A673 (cell line): ENCODE measurements at regions of chr17 and their contacts with region 1.

Region 1: DNA sequence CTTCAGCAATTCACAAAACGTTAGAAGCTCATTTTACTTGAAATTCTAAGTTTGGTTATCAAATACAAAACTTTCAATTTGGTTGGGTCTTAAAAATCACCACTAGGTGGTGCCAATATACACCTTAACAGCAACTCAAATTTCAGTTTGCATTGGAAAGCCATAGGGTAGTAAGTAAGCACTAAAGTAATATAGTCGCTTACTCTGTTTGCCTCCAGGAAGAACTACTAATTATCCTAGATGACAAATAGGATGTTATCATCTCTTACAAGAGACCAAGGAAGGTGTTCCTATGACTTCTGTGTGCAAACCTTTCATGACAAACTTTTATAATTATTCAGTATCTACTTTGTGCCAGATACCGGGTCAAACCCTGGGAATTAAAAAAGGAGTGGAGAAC is 93.3 kb downstream of the MYO1D start:
- DNase-seq: peak; percentile 60
- H3K4me3 ChIP-seq: no peak overlapping the region
- H3K27ac ChIP-seq: no peak overlapping the region
- H3K4me1 ChIP-seq: no peaks in the 10 kb centered on the region
- H3K27me3 ChIP-seq: no peaks in the 10 kb centered on the region
- CTCF ChIP-seq: peak; percentile 58

Region 2: GRCh38 chr17:32648450-32648849 is 135.2 kb before region 1 on chr17:
- CTCF ChIA-PET with region 1: no interaction called
- POLR2A ChIA-PET with region 1: no interaction called
- intact Hi-C with region 1: no loop called
- DNase-seq: no peak
- H3K4me3 ChIP-seq: no peak overlapping the region
- H3K27ac ChIP-seq: no peak overlapping the region
- H3K4me1 ChIP-seq: no peaks in the 10 kb centered on the region
- H3K27me3 ChIP-seq: no peaks in the 10 kb centered on the region
- CTCF ChIP-seq: no peak

Region 3: DNA sequence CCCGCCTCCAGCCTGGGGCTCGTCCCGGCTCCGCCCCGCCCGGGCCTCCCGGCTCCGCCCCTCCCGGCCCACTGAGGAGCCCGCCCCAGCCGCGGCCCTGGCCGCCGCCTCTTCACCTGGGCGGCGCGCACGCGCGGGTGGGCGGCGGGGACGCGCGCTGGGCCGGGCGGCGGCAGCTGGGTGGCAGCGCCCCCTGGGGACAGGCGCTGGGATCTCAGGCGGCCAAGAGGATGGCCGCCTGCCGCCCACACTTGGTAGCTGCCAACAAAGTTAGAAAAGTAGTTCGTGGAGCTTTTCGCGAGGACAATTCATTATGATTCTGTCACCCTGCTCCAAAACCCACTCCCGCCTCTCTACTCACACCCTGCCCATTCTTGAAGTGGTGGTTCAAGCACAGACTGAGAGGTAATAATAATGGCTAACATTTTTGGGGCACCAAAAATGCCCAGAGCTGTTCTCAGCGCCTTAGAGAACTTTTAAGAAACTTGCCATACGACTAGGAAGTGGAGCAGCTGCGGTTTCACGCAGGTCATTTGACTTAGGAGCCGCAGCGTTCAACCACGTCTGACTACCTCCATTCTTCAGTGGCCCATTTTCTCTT is 93.7 kb after region 1 on chr17:
- CTCF ChIA-PET with region 1: interaction called, 4 read pairs
- POLR2A ChIA-PET with region 1: no interaction called
- intact Hi-C with region 1: loop called (anchors 1 kb)
- DNase-seq: peak; percentile 82
- H3K4me3 ChIP-seq: peak overlapping the region; percentile 60
- H3K27ac ChIP-seq: no peak overlapping the region
- H3K4me1 ChIP-seq: no peaks in the 10 kb centered on the region
- H3K27me3 ChIP-seq: no peaks in the 10 kb centered on the region
- CTCF ChIP-seq: peak; percentile 54

Region 4: DNA sequence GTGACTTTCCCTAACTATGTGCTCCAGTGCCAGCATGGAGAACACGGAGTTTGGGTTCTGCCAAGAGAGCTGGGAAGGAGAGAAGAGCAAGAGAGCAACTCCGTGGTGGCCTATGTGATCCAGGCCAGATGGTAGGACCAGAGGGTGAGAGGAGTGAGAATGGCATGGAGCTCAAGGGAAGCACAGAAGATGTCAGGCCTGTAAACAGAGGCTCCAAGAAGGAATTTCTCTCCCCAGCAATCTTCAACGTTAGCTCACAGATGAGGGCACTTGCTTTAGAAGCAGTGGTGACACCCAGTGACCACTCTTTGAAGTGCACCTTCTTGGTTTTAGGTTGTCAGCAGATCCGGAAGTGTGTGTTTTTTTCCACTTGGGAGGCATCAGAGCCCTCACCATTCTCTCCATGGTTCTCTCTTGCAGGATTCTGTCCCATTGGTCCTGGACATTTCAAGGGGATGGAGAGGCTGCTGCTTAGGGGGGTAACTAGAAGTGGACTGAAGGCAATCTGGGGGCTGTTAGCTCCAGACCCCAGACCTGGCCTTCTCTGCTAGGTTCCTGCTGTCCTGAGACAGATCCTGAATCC is 126.3 kb after region 1 on chr17:
- CTCF ChIA-PET with region 1: no interaction called
- POLR2A ChIA-PET with region 1: no interaction called
- intact Hi-C with region 1: loop called (anchors 5 kb)
- DNase-seq: peak; percentile 73
- H3K4me3 ChIP-seq: no peak overlapping the region
- H3K27ac ChIP-seq: no peak overlapping the region
- H3K4me1 ChIP-seq: no peaks in the 10 kb centered on the region
- H3K27me3 ChIP-seq: no peaks in the 10 kb centered on the region
- CTCF ChIP-seq: peak; percentile 63